ENCODE measurements at regions of chr5 and their contacts with region 1.

Region 1: GRCh38 chr5:50302815-50303490 is 138.1 kb downstream of the EMB start:
- DNase-seq: peak; percentile 81
- ATAC-seq: peak; percentile 97
- H3K4me3 ChIP-seq: 0 out of 4 replicates have a peak overlapping the region, but pooled peaks of 1 of the 2 experiments have one; percentile 8
- H3K27ac ChIP-seq: no peak overlapping the region; the same call in 1 of the 2 replicates
- H3K4me1 ChIP-seq: peaks cover 0 to 24% of the 10 kb centered on the region in 2 experiments; a peak in 2 of 4 replicates
- H3K27me3 ChIP-seq: no peaks in the 10 kb centered on the region
- CTCF ChIP-seq: no peak
- POLR2A ChIP-seq: no peak
- RAD21 ChIP-seq: no peak

Region 2: GRCh38 chr5:50359187-50359586 is 56.2 kb after region 1 on chr5:
- CTCF ChIA-PET with region 1: no interaction called
- POLR2A ChIA-PET with region 1: no interaction called
- RAD21 ChIA-PET with region 1: no interaction called
- intact Hi-C with region 1: loop called (anchors 5 kb)
- DNase-seq: no peak
- ATAC-seq: no peak
- H3K4me3 ChIP-seq: no peak overlapping the region
- H3K27ac ChIP-seq: no peak overlapping the region
- H3K4me1 ChIP-seq: no peaks in the 10 kb centered on the region
- H3K27me3 ChIP-seq: no peaks in the 10 kb centered on the region
- CTCF ChIP-seq: no peak
- POLR2A ChIP-seq: no peak
- RAD21 ChIP-seq: no peak

Region 3: DNA sequence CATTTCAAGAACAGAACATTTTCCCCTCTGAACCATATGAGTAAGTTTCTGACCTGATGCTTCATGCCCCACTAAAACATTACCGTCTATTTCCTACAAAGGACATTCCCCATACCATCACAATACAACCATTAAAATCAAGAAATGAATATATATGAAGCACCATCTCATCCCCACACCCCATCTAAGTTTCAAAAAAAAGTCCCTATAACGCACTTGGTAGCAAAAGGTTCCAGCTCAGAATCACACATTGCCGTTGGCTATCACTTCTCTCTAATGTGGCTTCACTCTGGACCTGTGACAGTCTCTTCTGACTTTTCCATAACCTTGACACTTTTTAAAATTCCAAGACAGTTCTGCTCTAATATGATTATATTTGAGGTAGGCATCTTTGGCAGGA is 132.2 kb after region 1 on chr5:
- CTCF ChIA-PET with region 1: no interaction called
- POLR2A ChIA-PET with region 1: no interaction called
- RAD21 ChIA-PET with region 1: no interaction called
- intact Hi-C with region 1: no loop called
- DNase-seq: no peak
- ATAC-seq: no peak
- H3K4me3 ChIP-seq: no peak overlapping the region
- H3K27ac ChIP-seq: no peak overlapping the region
- H3K4me1 ChIP-seq: no peaks in the 10 kb centered on the region
- H3K27me3 ChIP-seq: no peaks in the 10 kb centered on the region
- CTCF ChIP-seq: no peak
- POLR2A ChIP-seq: no peak
- RAD21 ChIP-seq: no peak

Region 4: DNA sequence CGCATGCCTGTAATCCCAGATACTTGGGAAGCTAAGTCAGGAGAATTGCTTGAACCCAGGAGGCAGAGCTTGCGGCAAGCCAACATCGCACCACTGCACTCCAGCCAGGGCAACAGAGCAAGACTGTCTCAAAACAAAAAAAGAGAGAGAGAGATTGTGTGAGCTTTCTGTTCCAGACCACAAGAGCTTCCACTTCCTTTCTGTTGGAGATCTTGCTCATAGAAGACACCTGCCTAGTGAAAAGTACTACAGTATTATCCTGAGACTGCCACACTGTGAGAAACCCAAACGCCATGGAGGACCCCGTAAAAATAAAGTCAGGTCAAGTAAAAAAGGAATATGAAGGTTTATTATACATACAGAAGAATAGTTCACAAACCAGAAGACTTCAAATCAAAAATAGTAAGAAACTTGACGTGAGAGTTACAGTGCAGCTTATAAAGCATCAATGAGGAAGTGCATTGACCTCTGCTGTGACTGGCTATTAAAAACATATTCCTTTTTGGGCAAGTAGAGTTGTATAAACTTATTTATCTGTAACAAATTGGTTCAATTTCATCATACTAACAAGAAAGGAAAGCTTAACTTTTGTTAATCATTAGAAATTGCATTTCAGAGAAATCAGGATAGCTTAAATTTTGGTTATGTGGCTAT is 142.5 kb after region 1 on chr5:
- CTCF ChIA-PET with region 1: no interaction called
- POLR2A ChIA-PET with region 1: no interaction called
- RAD21 ChIA-PET with region 1: no interaction called
- intact Hi-C with region 1: no loop called
- DNase-seq: no peak
- ATAC-seq: no peak
- H3K4me3 ChIP-seq: no peak overlapping the region
- H3K27ac ChIP-seq: no peak overlapping the region
- H3K4me1 ChIP-seq: peaks cover 0 to 3% of the 10 kb centered on the region in 2 experiments; a peak in 2 of 4 replicates
- H3K27me3 ChIP-seq: no peaks in the 10 kb centered on the region
- CTCF ChIP-seq: no peak
- POLR2A ChIP-seq: no peak
- RAD21 ChIP-seq: no peak